ENCODE measurements at regions of chr12 and their contacts with region 1.

Region 1: DNA sequence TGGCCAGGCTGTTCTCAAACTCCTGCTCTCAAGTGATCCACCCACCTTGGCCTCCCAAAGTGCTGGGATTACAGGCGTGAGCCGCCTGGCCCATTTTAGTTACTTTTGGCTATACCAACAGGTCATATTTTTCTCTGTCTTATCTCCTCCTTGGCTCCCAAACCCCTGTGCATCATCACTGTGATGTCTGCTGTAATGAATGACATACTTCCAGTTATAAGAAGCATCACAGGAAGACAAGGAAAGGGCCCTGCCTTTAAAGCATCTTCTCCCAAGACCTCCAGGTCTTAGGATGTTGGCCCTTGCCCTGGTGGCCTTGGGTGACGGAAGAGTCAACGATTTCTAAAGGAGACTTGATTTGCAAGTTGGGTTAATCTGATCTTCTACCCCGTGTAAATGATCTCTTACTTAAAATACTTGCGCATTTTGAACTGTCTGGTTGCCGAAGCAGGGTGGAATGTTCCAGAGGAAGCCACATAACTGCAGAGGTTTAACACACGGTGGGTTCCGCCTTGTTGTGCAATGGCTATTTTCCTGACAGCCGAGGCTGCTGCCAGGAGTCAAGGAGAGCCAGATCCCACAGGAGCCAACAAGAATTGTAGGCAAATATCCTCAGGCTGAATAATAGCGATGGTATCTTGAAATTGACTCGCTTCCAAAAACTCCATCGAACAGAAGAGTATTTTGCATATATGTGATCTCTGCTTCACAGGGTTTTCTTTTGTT is 55.7 kb upstream of the PLXNC1 start:
- DNase-seq: no peak
- H3K4me3 ChIP-seq: no peak overlapping the region
- H3K27ac ChIP-seq: no peak overlapping the region
- H3K4me1 ChIP-seq: peaks cover 0 to 14% (median 4%) of the 10 kb centered on the region in 4 experiments
- H3K27me3 ChIP-seq: peaks cover 0 to 2% (median 0%) of the 10 kb centered on the region in 5 experiments

Region 2: GRCh38 chr12:94074980-94075928 is 17.4 kb before region 1 on chr12:
- CTCF ChIA-PET with region 1: interaction called, 43 read pairs
- POLR2A ChIA-PET with region 1: no interaction called
- DNase-seq: peak; percentile 47 to 56 (median 54)
- H3K4me3 ChIP-seq: no peak overlapping the region
- H3K27ac ChIP-seq: no peak overlapping the region
- H3K4me1 ChIP-seq: peaks cover 2 to 45% (median 22%) of the 10 kb centered on the region in 4 experiments
- H3K27me3 ChIP-seq: no peaks in the 10 kb centered on the region